ENCODE measurements at regions of chr3 and their contacts with region 1.

Region 1: DNA sequence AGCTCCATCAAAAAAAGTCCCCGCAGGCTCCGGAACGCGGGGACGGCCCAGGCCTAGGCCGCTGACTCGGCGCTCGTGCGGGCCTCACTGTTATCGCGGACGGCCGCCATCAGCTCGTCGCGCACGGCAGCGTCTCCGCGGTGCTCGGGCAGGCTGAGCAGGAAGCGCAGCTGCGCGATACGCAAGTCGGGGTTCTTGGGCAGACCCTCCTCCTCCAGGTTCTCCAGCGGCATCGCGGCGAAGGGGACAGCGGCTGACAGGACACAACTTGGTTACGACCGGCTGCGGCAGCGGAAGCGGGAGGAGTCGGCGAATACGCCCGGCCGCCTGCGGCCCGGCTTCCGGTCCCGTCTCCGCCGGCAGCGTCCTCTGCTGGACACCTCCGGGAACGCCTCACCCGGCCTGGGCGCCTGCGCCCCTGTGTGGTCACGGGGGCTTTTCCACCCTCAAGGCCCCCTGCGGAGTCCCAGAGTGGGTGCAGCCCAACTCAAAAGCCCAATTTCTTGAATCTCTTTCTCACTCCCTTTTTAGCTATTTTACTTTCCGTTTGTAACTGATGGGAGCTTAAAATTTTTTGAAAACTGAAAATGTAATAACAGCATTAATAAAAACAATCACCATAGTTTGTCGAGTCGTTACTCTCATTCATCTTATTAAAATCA is at the start of gene PSMD6:
- DNase-seq: peak; percentile 96
- ATAC-seq: peak; percentile 93
- H3K4me3 Mint-ChIP-seq: peak within 1 kb of the TSS; percentile 72
- H3K27ac Mint-ChIP-seq: peak within 1 kb of the TSS; percentile 92
- H3K4me1 Mint-ChIP-seq: peaks cover 25% of the 10 kb centered on the region
- H3K27me3 Mint-ChIP-seq: peaks cover 3% of the 10 kb centered on the region
- total RNA-seq, gene PSMD6: 109 to 117 TPM

Region 2: GRCh38 chr3:63863148-63864007 is 159.9 kb before region 1 on chr3 and contains the starts of genes ATXN7 and THOC7:
- CTCF ChIA-PET with region 1: no interaction called
- POLR2A ChIA-PET with region 1: no interaction called
- intact Hi-C with region 1: loop called (anchors 1 to 5 kb)
- DNase-seq: peak; percentile 82
- ATAC-seq: peak; percentile 78
- H3K4me3 Mint-ChIP-seq: peak within 1 kb of the TSS; percentile 94
- H3K27ac Mint-ChIP-seq: peak within 1 kb of the TSS; percentile 95
- H3K4me1 Mint-ChIP-seq: peaks cover 58% of the 10 kb centered on the region
- H3K27me3 Mint-ChIP-seq: no peaks in the 10 kb centered on the region
- total RNA-seq, gene ATXN7: 27.1 to 58.3 TPM
- total RNA-seq, gene THOC7: 80.8 to 87.1 TPM

Region 3: GRCh38 chr3:63961891-63962290 is 61.4 kb before region 1 on chr3:
- CTCF ChIA-PET with region 1: interaction called, 8 read pairs
- POLR2A ChIA-PET with region 1: no interaction called
- intact Hi-C with region 1: loop called (anchors 1 to 5 kb)
- DNase-seq: no peak
- ATAC-seq: peak; percentile 74
- H3K4me3 Mint-ChIP-seq: no peak overlapping the region
- H3K27ac Mint-ChIP-seq: no peak overlapping the region
- H3K4me1 Mint-ChIP-seq: peaks cover 50% of the 10 kb centered on the region
- H3K27me3 Mint-ChIP-seq: no peaks in the 10 kb centered on the region

Region 4: GRCh38 chr3:63980835-63981498 is 42.4 kb before region 1 on chr3:
- CTCF ChIA-PET with region 1: interaction called, 9 read pairs
- POLR2A ChIA-PET with region 1: no interaction called
- intact Hi-C with region 1: loop called in 1 of 2 experiments (anchors 2 kb)
- DNase-seq: no peak
- ATAC-seq: no peak
- H3K4me3 Mint-ChIP-seq: no peak overlapping the region
- H3K27ac Mint-ChIP-seq: peak overlapping the region; percentile 62
- H3K4me1 Mint-ChIP-seq: peaks cover 85% of the 10 kb centered on the region
- H3K27me3 Mint-ChIP-seq: no peaks in the 10 kb centered on the region

Region 5: GRCh38 chr3:64484289-64484992 is 461.1 kb after region 1 on chr3:
- CTCF ChIA-PET with region 1: interaction called, 28 read pairs
- POLR2A ChIA-PET with region 1: no interaction called
- intact Hi-C with region 1: loop called (anchors 2 kb)
- DNase-seq: peak; percentile 87
- ATAC-seq: peak; percentile 97
- H3K4me3 Mint-ChIP-seq: no peak overlapping the region
- H3K27ac Mint-ChIP-seq: no peak overlapping the region
- H3K4me1 Mint-ChIP-seq: no peaks in the 10 kb centered on the region
- H3K27me3 Mint-ChIP-seq: peaks cover 12% of the 10 kb centered on the region

Measured in activated CD4-positive, alpha-beta T cell treated with anti-CD3 and anti-CD28 coated beads for 36 hours (primary cell).